Upper lobe of right lung (tissue), 1 donor: ENCODE measurements at regions of chr17 and their contacts with region 1.

Region 1: GRCh38 chr17:45048795-45049563 is 2.5 kb downstream of the DCAKD start:
- DNase-seq: no peak
- ATAC-seq: no peak
- H3K4me3 ChIP-seq: no peak overlapping the region
- H3K27ac ChIP-seq: no peak overlapping the region
- H3K4me1 ChIP-seq: peaks cover 9% of the 10 kb centered on the region
- H3K27me3 ChIP-seq: no peaks in the 10 kb centered on the region
- CTCF ChIP-seq: peak; percentile 20

Region 2: DNA sequence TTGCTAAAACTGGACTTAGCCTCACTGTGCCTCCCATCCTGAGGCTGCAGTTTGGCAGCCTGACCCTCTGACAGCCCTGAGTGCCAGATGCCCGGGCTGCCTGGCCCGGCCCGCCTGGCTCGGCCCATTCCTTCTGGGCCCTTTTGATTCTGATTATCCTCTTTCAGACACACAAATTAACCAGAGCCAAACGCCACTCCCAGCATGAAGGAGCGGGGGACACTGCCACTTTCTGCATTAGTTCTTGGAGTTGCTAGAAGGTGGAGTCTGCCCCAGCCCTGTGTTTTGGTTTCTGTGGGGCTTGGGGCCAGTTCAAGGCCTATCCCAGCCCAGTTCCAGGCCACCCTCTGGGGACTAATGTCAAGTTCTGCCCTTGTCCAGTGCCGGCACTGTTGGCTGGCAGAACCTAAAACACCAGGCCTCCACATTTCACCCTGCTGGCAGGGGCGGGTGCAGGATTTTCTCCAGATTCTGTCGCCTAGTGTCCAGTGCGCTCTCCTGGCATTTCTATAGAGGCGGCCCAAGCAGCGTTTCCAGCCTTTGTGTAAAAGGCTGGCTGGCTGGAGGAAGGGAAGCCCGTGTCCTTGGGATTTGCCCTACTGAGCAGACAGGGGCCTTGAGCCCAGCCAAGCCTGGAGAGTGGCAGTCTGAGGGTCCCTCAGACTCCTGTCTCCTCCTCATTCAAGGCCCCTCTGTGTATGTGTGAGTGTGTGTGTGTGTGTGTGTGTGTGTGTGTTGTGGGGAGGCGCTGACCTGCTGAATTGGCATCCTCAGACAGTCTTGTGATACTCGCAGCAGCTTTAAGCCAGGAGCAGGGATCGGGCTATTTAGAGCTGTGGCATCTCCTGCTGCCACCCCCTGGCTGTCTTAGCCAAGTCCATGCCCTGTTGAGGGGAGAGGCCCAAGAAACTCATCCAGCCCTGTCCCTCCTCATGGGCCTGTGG is 62.0 kb after region 1 on chr17:
- intact Hi-C with region 1: loop called (anchors 10 kb)
- DNase-seq: no peak
- ATAC-seq: no peak
- H3K4me3 ChIP-seq: no peak overlapping the region
- H3K27ac ChIP-seq: peak overlapping the region; percentile 11
- H3K4me1 ChIP-seq: no peaks in the 10 kb centered on the region
- H3K27me3 ChIP-seq: no peaks in the 10 kb centered on the region
- CTCF ChIP-seq: no peak